GM13976 (cell line): ENCODE measurements at regions of chr6 and their contacts with region 1.

Region 1: DNA sequence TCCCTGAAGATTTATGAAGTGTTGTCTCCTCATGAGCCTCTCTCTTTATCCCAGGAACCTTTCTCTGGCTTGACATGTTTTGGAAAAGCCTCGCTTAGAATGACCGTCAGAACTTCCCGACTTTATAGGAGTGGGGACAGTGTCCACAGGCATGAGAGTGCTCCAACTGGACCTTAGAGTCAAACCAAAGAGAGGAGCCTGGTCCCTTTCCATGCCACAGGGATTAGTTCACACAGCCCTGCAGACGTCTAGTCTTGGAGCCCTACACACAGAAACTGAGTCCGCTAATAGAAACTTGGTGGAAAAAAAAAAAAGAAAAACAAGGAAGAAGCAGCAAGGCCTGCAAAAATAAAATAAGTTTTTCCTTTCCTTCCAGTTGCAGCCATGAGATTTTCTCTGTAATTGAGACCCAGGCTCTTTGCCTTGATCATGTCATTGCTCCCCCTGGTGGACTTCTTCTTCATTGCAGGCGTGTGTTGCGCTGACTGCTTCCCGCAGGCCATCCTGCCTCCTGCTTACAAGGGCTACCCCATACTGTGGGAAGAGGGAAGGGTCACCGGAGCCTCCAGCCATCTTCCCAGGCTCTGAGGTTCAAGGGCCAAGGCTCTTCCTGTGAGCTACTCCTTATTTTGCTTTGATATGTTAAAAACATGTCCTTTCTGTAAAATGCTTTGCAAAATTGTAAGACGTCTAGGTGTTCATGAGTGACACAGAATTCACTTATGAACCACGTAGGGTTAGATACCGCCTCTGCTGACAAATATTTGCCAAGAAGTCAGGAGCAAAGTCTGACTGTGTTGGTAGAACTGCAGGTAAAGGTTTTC is 201.0 kb downstream of the UST start:
- DNase-seq: peak; percentile 70
- CTCF ChIP-seq: peak; percentile 90

Region 2: DNA sequence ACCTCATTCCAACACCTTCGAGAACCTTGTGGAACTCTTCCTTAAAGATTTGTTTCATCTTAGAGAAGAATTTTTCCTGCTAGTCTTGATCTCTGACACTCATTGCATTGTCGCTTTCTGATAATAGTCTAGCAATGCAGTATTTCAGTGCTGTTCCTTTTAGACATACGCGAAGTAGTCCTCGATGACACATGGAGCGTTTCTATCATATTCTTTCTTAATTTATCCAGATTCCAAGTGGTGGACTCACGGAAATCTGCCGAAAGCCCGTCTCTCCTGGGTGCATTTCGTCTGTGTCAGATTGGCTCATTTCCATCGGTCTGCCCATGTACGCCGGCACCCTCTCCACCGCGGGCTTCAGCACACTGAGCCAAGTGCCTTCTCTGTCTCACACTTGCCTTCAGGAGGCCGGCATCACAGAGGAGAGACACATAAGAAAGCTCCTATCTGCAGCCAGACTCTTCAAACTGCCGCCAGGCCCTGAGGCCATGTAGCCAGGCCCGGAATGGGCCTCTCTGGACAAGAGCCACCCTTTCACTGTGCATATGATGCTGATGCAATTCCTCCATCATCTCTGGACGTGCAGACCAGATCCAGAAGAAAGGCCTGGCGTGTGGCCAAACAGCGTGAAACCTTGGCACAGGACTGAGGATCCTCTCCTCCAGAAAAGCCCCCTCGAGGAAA is 399.6 kb before region 1 on chr6:
- in situ Hi-C with region 1: no loop called
- DNase-seq: no peak
- CTCF ChIP-seq: no peak

Region 3: GRCh38 chr6:148559848-148560433 is 387.9 kb before region 1 on chr6:
- in situ Hi-C with region 1: loop called (anchors 10 kb)
- DNase-seq: peak; percentile 86
- CTCF ChIP-seq: peak; percentile 99

Region 4: GRCh38 chr6:148760568-148761526 is 187.0 kb before region 1 on chr6:
- in situ Hi-C with region 1: loop called (anchors 10 kb)
- DNase-seq: peak; percentile 61
- CTCF ChIP-seq: no peak